Activated CD8-positive, alpha-beta T cell treated with anti-CD3 and anti-CD28 coated beads for 36 hours (primary cell): ENCODE measurements at regions of chr12 and their contacts with region 1.

Region 1: GRCh38 chr12:123983822-123984485 is 10.9 kb downstream of the ZNF664 start:
- DNase-seq: peak; percentile 59
- ATAC-seq: peak; percentile 69
- H3K4me3 Mint-ChIP-seq: no peak overlapping the region
- H3K27ac Mint-ChIP-seq: no peak overlapping the region
- H3K4me1 Mint-ChIP-seq: peaks cover 21% of the 10 kb centered on the region
- H3K27me3 Mint-ChIP-seq: no peaks in the 10 kb centered on the region
- CTCF ChIP-seq: peak; percentile 68

Region 2: GRCh38 chr12:123854918-123855317 is 129.0 kb before region 1 on chr12:
- CTCF ChIA-PET with region 1: no interaction called
- POLR2A ChIA-PET with region 1: no interaction called
- intact Hi-C with region 1: no loop called
- DNase-seq: no peak
- ATAC-seq: no peak
- H3K4me3 Mint-ChIP-seq: no peak overlapping the region
- H3K27ac Mint-ChIP-seq: no peak overlapping the region
- H3K4me1 Mint-ChIP-seq: no peaks in the 10 kb centered on the region
- H3K27me3 Mint-ChIP-seq: no peaks in the 10 kb centered on the region
- CTCF ChIP-seq: no peak

Region 3: GRCh38 chr12:123905319-123905925 is 78.5 kb before region 1 on chr12:
- CTCF ChIA-PET with region 1: interaction called, 69 read pairs
- POLR2A ChIA-PET with region 1: interaction called, 3 read pairs
- intact Hi-C with region 1: loop called (anchors 2 kb)
- DNase-seq: peak; percentile 76
- ATAC-seq: peak; percentile 63
- H3K4me3 Mint-ChIP-seq: no peak overlapping the region
- H3K27ac Mint-ChIP-seq: no peak overlapping the region
- H3K4me1 Mint-ChIP-seq: peaks cover 13% of the 10 kb centered on the region
- H3K27me3 Mint-ChIP-seq: peaks cover 2% of the 10 kb centered on the region
- CTCF ChIP-seq: peak; percentile 83

Region 4: GRCh38 chr12:123973552-123974341 is 10.2 kb before region 1 on chr12:
- CTCF ChIA-PET with region 1: interaction called, 14 read pairs
- POLR2A ChIA-PET with region 1: no interaction called
- intact Hi-C with region 1: no loop called
- DNase-seq: peak; percentile 29
- ATAC-seq: no peak
- H3K4me3 Mint-ChIP-seq: peak overlapping the region; percentile 97
- H3K27ac Mint-ChIP-seq: peak overlapping the region; percentile 78
- H3K4me1 Mint-ChIP-seq: peaks cover 33% of the 10 kb centered on the region
- H3K27me3 Mint-ChIP-seq: no peaks in the 10 kb centered on the region
- CTCF ChIP-seq: no peak

Region 5: DNA sequence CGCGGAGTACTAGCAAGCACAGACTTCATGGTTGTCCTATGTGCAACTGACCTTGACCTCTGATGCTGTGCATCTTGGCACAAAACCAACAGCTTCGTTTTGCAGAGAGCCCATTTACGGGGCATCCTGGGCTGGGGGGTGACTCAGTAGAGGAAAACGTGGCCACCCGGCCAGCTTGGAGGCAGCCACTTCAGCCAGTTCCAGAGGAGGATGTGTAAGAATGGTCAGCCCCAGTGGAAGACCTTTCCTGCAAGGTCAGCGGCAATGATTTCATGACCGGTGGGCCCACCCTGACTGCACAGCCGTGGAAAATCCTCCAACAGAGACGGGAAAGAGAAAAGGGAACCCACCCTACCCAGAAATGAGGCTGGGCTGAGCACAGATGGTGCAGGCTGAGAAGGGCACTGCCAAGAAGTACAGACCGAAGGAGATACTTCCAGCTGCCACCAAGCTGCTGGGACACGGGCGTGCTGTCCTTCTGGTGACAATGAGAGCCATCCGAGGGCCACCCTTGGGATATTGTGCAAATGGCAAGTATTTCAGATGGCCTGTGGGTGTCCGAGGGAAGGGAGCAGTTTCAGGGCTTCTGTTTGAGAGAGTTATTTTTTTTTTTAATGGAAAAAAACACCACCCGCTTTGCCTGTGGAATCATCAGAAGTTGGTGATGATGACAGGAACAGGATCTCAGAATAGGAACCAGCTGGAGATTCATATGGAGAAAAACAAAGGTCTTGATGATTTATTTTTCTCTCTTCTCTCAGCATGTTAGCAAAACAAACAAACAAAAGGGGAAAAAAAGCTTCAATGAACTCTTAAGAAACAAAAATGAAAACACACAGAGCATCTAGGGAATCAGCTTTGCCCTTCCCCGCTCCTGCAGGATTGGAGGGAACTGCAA is 190.7 kb after region 1 on chr12:
- CTCF ChIA-PET with region 1: no interaction called
- POLR2A ChIA-PET with region 1: no interaction called
- intact Hi-C with region 1: no loop called
- DNase-seq: no peak
- ATAC-seq: no peak
- H3K4me3 Mint-ChIP-seq: no peak overlapping the region
- H3K27ac Mint-ChIP-seq: no peak overlapping the region
- H3K4me1 Mint-ChIP-seq: no peaks in the 10 kb centered on the region
- H3K27me3 Mint-ChIP-seq: peaks cover 2% of the 10 kb centered on the region
- CTCF ChIP-seq: no peak